Activated naive CD4-positive, alpha-beta T cell treated with anti-CD3 and anti-CD28 coated beads for 36 hours (primary cell): ENCODE measurements at regions of chr11 and their contacts with region 1.

Region 1: GRCh38 chr11:3880724-3881123 is 25.3 kb downstream of the STIM1 start:
- DNase-seq: no peak
- H3K4me3 Mint-ChIP-seq: no peak overlapping the region
- H3K27ac Mint-ChIP-seq: peak overlapping the region; percentile 37
- H3K4me1 Mint-ChIP-seq: peaks cover 77% of the 10 kb centered on the region
- H3K27me3 Mint-ChIP-seq: no peaks in the 10 kb centered on the region

Region 2: GRCh38 chr11:3867209-3868091 is 13.3 kb before region 1 on chr11:
- CTCF ChIA-PET with region 1: interaction called, 6 read pairs
- intact Hi-C with region 1: loop called (anchors 1 kb)
- DNase-seq: peak; percentile 70
- H3K4me3 Mint-ChIP-seq: peak overlapping the region; percentile 36
- H3K27ac Mint-ChIP-seq: peak overlapping the region; percentile 87
- H3K4me1 Mint-ChIP-seq: peaks cover 81% of the 10 kb centered on the region
- H3K27me3 Mint-ChIP-seq: no peaks in the 10 kb centered on the region